ENCODE measurements at regions of chr1 and their contacts with region 1.

Region 1: DNA sequence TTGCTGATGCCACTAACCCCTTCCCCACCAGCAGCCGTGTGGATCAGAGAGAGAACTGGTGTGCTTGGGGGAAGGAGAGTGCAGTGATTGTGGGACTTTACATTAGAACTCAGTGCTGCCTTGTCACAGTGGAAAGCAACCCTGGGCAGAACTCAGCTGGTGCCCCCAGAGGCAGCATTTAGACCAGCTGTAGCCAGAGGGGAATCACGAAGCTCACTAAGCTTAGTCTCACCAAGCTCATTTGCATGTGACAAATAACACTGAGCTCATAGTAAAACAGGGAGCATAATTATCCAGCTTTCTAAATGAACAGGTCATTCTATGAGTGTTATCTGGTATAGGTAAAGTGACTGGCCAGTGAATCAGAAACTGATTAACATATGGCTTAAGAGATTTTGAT is 9.8 kb upstream of the SMAP2 start:
- H3K4me3 Mint-ChIP-seq: no peak overlapping the region
- H3K27ac Mint-ChIP-seq: no peak overlapping the region
- H3K4me1 Mint-ChIP-seq: peaks cover 37% of the 10 kb centered on the region
- H3K27me3 Mint-ChIP-seq: no peaks in the 10 kb centered on the region

Region 2: DNA sequence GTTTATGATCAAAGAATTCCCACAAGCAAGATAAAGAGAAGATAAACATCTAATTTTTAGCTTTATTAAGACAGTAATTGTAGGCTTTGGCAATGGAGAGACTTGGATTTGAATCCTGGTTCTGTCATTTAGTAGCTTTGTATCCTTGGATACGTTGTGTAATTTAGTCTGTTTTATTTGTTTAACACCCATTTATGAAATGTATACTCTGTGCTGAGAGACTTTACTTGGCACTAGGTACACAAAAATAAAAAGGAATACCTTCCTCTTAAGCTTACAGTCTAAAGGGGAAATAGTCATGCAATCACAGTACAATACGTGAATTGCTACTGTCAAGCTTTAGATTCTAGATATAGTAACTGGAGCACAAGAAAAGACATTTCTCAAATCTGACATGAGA is 81.9 kb before region 1 on chr1:
- intact Hi-C with region 1: no loop called
- H3K4me3 Mint-ChIP-seq: no peak overlapping the region
- H3K27ac Mint-ChIP-seq: no peak overlapping the region
- H3K4me1 Mint-ChIP-seq: no peaks in the 10 kb centered on the region
- H3K27me3 Mint-ChIP-seq: no peaks in the 10 kb centered on the region

Region 3: DNA sequence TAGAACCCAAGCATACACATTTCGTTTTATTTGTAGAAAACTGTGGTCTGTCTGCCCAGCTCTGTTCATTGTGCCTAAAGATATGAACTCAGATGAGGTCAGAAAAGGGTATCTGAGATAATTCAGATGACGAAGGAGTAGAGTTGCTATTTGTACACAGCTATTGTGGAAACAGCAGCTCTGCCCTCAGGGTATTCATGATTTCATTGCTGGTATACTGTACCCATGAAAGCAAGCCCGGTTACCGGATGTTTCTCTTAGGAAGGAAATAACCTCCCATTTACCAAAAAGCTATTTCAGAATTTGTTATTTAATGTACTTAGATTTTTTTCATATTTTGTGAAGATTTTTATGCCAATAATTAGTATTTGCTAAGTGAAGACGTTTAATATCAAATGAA is 47.6 kb after region 1 on chr1:
- intact Hi-C with region 1: loop called (anchors 5 kb)
- H3K4me3 Mint-ChIP-seq: no peak overlapping the region
- H3K27ac Mint-ChIP-seq: no peak overlapping the region
- H3K4me1 Mint-ChIP-seq: no peaks in the 10 kb centered on the region
- H3K27me3 Mint-ChIP-seq: no peaks in the 10 kb centered on the region

Region 4: DNA sequence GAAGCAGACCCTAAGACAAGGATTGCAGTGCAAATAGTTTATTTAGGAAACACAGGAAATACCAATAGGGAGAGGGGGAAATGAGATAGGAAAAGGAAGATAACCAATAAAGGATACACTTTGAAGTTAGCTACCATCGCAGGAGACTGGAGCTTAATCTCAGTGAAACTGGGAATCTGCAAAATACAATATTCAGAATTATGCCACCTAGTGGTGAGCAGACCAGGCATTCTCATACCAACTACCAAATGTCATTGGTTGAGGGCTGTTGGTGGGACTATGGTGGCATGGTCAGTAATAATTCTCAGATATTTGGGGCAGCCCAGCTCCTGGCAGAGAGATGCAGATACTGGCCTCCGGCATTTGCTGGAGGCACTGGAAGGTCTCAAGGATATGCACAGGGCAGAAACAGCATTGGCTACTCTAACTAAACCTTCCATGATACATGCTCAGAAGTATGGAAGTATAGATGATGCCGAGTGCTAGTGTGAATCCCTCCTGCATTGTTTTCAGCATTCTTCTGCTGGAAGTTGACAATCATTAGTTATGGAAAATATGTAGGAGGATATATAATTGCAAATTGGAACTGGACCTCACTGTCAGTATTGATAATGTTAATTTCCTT is 74.8 kb after region 1 on chr1:
- intact Hi-C with region 1: no loop called
- H3K4me3 Mint-ChIP-seq: no peak overlapping the region
- H3K27ac Mint-ChIP-seq: no peak overlapping the region
- H3K4me1 Mint-ChIP-seq: peaks cover 9% of the 10 kb centered on the region
- H3K27me3 Mint-ChIP-seq: no peaks in the 10 kb centered on the region

Measured in dendritic cell treated with granulocyte-macrophage colony-stimulating factor and Interleukin-4, amounts not matched to agents 40 ng/mL and 50 ng/mL, for 4 days (primary cell).